Panc1 (cell line): ENCODE measurements at regions of chr7 and their contacts with region 1.

Region 1: GRCh38 chr7:139602143-139602722 is 78.7 kb downstream of the CLEC2L start:
- DNase-seq: no peak
- ATAC-seq: peak; percentile 89; the same call in 1 of the 2 replicates
- H3K4me3 ChIP-seq: no peak overlapping the region
- H3K27ac ChIP-seq: no peak overlapping the region
- H3K4me1 ChIP-seq: no peaks in the 10 kb centered on the region
- H3K27me3 ChIP-seq: no peaks in the 10 kb centered on the region
- CTCF ChIP-seq: peak; percentile 82

Region 2: DNA sequence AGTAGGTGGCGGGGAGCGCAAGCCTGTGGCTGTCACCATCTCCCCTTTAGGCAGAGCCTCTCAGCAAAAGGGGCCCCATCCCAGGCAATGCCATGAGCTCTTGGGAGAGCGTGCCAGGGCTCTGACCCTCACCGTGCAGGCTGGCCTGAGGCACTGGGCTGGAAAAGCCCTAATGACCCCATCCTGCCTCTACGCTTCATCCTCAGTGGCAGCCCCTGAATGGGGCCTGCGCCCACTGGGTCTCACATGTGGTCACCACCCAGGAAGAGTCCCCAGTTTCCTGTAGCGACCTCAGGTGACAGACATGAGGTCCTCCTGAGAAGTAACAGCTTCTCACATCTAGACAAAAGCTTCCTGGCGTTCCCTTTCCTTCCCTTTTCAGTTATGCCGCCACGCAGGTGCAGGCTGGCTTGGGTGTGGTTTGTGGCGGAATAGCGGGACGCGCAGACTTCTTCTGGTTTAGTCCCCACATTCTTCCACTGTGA is 19.5 kb before region 1 on chr7:
- CTCF ChIA-PET with region 1: no interaction called
- POLR2A ChIA-PET with region 1: interaction called, 14 read pairs
- in situ Hi-C with region 1: no loop called
- intact Hi-C with region 1: no loop called
- DNase-seq: no peak
- ATAC-seq: no peak
- H3K4me3 ChIP-seq: no peak overlapping the region
- H3K27ac ChIP-seq: no peak overlapping the region
- H3K4me1 ChIP-seq: no peaks in the 10 kb centered on the region
- H3K27me3 ChIP-seq: no peaks in the 10 kb centered on the region
- CTCF ChIP-seq: no peak

Region 3: DNA sequence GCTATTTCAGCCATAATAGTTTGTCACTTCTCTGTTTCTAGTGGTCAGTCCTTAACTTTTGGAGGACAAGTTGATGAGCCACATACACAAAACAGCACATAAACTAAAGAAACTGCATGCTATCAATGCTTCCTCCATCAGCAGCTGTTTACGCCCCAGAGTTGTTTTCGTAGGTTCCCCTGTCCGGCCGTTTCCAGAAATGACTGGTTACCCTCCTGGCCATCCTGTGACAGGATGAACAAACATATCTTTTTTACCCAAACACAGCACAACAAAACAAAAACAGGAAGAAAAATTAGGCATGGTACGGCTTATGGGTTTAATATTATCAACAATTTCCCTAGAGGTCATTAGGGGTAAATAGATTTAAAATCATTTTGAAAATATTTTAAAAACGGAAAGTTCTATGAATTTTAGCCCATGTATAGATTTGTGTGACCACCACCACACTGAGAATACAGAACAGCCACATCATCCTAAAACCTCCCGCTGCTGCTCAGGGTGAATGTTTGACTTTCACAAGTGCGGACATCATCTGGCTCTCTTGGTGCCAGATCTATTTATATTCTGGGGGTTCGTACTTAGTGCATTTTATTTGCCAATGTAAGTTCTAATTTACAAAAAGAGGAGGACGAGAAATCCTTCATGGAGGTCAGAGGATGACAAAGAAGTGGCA is 100.7 kb after region 1 on chr7:
- CTCF ChIA-PET with region 1: no interaction called
- POLR2A ChIA-PET with region 1: no interaction called
- in situ Hi-C with region 1: no loop called
- intact Hi-C with region 1: no loop called
- DNase-seq: no peak
- ATAC-seq: no peak
- H3K4me3 ChIP-seq: no peak overlapping the region
- H3K27ac ChIP-seq: no peak overlapping the region
- H3K4me1 ChIP-seq: peaks cover 5% of the 10 kb centered on the region; the same call in 1 of the 2 replicates
- H3K27me3 ChIP-seq: no peaks in the 10 kb centered on the region
- CTCF ChIP-seq: no peak

Region 4: GRCh38 chr7:140003913-140004382 is 401.7 kb after region 1 on chr7:
- CTCF ChIA-PET with region 1: interaction called, 8 read pairs
- POLR2A ChIA-PET with region 1: no interaction called
- in situ Hi-C with region 1: no loop called
- intact Hi-C with region 1: loop called (anchors 1 kb)
- DNase-seq: peak; percentile 35
- ATAC-seq: peak; percentile 50; the same call in 1 of the 2 replicates
- H3K4me3 ChIP-seq: no peak overlapping the region
- H3K27ac ChIP-seq: no peak overlapping the region
- H3K4me1 ChIP-seq: peaks cover 4% of the 10 kb centered on the region; the same call in 1 of the 2 replicates
- H3K27me3 ChIP-seq: no peaks in the 10 kb centered on the region
- CTCF ChIP-seq: peak; percentile 82